ENCODE measurements at regions of chr2 and their contacts with region 1.

Region 1: DNA sequence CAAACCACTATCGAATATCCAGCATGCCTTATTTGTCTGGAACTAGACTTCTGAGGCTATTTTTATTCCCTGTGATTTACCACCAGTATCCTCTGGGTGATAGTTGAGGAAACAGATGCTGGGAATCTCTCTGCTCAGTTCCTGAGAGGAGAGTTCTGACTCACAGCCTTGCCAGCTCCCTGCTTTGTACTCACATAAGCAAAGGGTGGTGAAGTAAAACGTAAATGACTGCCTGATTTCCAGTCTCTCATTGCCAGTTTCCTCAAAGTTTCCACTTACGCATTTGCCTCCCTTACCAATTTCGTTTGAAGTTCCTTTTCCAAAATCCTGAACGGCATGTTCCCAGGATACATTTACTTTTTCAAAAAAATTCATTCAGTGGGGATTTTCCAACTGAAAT is 69.2 kb upstream of the HNRNPA3 start:
- DNase-seq: peak; percentile 55
- ATAC-seq: peak; percentile 85
- H3K4me3 ChIP-seq: no peak overlapping the region
- H3K27ac ChIP-seq: no peak overlapping the region
- H3K4me1 ChIP-seq: peaks cover 6% of the 10 kb centered on the region; the same call in 1 of the 2 replicates
- H3K27me3 ChIP-seq: peaks cover 50% of the 10 kb centered on the region
- CTCF ChIP-seq: no peak

Region 2: DNA sequence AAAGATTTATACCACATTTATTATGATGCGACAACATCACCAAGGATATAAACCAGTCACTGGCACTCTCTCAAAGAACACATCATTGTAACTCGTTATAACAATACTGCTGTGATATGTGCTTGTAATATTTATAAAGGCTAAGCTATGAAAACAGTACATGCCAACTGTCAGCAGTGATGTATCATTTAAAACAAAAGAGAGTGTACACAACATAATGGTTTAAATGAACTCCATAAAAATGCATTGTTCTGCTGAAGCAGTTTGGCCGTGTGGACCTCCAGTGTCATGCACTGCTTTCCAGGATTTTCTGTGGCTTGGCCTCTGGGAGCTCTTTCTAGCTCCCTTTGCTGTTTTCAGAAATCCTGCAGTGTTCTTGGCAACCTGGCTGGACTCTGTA is 658.6 kb before region 1 on chr2:
- CTCF ChIA-PET with region 1: interaction called, 12 read pairs
- POLR2A ChIA-PET with region 1: no interaction called
- intact Hi-C with region 1: no loop called
- DNase-seq: no peak
- ATAC-seq: peak; percentile 46; the same call in 1 of the 2 replicates
- H3K4me3 ChIP-seq: no peak overlapping the region
- H3K27ac ChIP-seq: no peak overlapping the region
- H3K4me1 ChIP-seq: peaks cover 10% of the 10 kb centered on the region; the same call in 1 of the 2 replicates
- H3K27me3 ChIP-seq: no peaks in the 10 kb centered on the region
- CTCF ChIP-seq: no peak

Region 3: GRCh38 chr2:176638167-176639015 is 505.1 kb before region 1 on chr2:
- CTCF ChIA-PET with region 1: no interaction called
- POLR2A ChIA-PET with region 1: no interaction called
- intact Hi-C with region 1: no loop called
- DNase-seq: peak; percentile 78
- ATAC-seq: peak; percentile 61
- H3K4me3 ChIP-seq: peak overlapping the region; percentile 71
- H3K27ac ChIP-seq: peak overlapping the region; percentile 76
- H3K4me1 ChIP-seq: peaks cover 41% of the 10 kb centered on the region
- H3K27me3 ChIP-seq: no peaks in the 10 kb centered on the region
- CTCF ChIP-seq: peak; percentile 86

Region 4: DNA sequence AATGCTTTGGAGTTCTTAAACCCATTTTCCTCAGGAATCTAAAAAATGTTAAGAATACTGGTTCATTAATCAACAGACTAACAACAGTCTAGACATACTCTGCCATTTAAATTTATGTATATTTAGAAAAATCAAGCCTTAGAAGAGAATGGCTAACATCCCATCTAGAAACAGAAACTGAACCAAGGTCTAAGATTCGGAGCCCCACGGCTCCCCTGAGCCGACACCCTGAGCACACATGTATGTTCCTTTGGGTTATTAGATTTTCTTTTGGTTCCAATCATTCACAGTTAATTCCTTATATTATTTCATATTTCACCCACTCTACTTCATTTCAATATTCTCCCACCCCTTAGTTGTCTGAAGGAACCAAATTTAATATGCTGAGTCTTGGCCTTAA is 25.7 kb before region 1 on chr2:
- CTCF ChIA-PET with region 1: no interaction called
- POLR2A ChIA-PET with region 1: no interaction called
- intact Hi-C with region 1: loop called (anchors 2 kb)
- DNase-seq: no peak
- ATAC-seq: no peak
- H3K4me3 ChIP-seq: no peak overlapping the region
- H3K27ac ChIP-seq: no peak overlapping the region
- H3K4me1 ChIP-seq: no peaks in the 10 kb centered on the region
- H3K27me3 ChIP-seq: peaks cover 57% of the 10 kb centered on the region
- CTCF ChIP-seq: no peak